BJ (cell line): ENCODE measurements at regions of chr7 and their contacts with region 1.

Region 1: GRCh38 chr7:151017953-151018420 is 6.3 kb downstream of the ATG9B start:
- DNase-seq: no peak
- H3K4me3 ChIP-seq: peak overlapping the region; percentile 14; the same call in 1 of the 2 replicates
- H3K27me3 ChIP-seq: peaks cover 27% of the 10 kb centered on the region
- CTCF ChIP-seq: peak; percentile 98

Region 2: DNA sequence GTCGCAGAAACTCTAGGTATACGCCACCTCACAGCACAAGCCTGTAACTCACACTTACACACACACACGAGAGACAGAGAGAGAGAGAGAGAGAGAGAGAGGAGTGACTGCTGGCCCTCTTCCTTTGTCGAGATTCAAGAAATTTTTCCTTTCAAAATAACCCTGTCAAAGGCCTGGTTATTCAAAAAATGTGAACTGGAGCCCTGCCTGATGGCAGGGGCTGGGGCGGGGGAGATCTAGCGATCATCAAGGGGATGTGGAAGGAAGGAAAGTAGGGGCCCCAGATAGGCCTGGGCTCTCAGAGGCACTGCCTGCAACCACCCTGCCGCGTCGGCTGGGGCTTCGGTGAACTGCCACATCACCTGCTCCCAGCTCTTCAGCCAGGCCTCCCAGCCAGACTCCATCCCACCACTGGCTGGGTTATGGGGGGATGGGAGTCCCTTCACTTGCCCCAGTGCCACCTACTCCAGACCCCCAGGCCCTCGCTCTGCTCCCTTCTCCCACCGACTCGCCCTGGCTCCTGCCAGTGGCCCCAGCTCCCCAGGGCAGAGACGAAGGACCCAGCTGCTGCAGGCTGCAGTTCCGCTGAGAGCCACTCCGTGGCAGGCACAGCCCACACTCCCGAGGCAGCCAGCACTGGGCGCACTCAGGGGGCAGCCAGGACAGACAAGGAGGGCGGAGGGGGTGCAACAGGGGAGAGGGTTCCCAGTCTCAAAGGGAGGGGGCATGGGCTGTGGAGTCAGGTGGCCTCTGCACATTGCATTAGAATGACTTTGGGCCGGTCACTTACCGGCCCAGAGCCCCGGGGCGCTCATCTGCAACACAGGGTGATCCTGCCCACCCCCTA is 55.2 kb before region 1 on chr7:
- CTCF ChIA-PET with region 1: interaction called, 15 read pairs
- POLR2A ChIA-PET with region 1: no interaction called
- DNase-seq: no peak
- H3K4me3 ChIP-seq: no peak overlapping the region
- H3K27me3 ChIP-seq: peaks cover 3% of the 10 kb centered on the region
- CTCF ChIP-seq: peak; percentile 92

Region 3: DNA sequence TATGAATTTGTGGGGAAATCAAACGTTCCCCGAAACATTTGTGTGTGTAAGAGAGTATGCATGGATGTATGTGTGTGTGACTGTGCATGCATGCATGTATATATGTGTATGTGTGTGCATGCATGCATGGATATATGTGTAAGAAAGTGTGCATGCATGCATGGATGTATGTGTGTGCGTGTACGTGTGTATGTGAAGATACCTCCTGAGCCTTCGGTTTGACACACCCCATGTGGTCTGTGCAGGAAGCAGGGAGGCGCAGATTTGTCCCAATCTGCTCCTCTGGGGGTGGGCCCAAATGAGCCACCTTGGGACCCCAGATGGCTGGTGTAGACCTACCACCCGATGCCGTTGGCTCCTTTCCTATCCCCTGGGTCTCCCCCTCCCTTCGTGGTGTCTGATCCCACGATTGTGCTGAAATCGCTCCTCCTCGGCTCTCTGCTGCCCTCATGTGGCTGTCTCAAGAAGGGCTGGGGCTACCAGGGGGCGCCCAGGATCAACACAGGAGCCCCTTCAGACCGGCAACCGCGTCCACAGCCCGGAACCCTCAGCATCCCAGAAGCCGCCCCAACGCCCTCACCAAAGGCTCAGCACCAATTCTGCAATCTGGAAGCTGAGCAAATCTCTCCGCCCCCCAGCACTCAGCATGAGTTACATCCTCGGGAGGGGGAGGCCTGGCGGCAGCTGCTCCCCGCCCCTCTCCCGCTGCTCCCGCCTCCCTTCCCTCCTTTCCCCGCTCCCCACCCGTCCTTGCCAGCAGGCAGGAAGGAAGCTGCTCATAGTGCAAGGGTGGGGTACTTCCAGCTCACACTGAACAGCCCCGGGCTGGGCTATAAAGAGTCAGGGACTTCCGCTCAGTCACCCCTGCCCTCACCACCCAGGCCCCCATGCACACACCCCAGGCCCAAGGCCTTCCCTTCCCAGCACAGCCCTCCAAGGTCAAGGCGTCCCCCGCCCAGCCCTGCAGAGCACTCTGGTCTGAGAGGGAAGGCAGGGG is 29.5 kb before region 1 on chr7:
- CTCF ChIA-PET with region 1: interaction called, 12 read pairs
- POLR2A ChIA-PET with region 1: no interaction called
- DNase-seq: no peak
- H3K4me3 ChIP-seq: no peak overlapping the region
- H3K27me3 ChIP-seq: peaks cover 4% of the 10 kb centered on the region
- CTCF ChIP-seq: peak; percentile 84

Region 4: GRCh38 chr7:151028131-151028947 is 10.4 kb after region 1 on chr7 and contains the start of gene ABCB8:
- CTCF ChIA-PET with region 1: interaction called, 22 read pairs
- POLR2A ChIA-PET with region 1: no interaction called
- DNase-seq: peak; percentile 99
- H3K4me3 ChIP-seq: peak within 1 kb of the TSS; percentile 84
- H3K27me3 ChIP-seq: 0 out of 2 replicates have a peak, but pooled peaks cover 1% of the 10 kb centered on the region
- CTCF ChIP-seq: peak; percentile 50
- polyA plus RNA-seq, gene ABCB8: 13.0 and 23.6 TPM in 2 replicates

Region 5: GRCh38 chr7:151038951-151039849 is 21.2 kb after region 1 on chr7:
- CTCF ChIA-PET with region 1: interaction called, 15 read pairs
- POLR2A ChIA-PET with region 1: no interaction called
- DNase-seq: peak; percentile 70
- H3K4me3 ChIP-seq: no peak overlapping the region
- H3K27me3 ChIP-seq: no peaks in the 10 kb centered on the region
- CTCF ChIP-seq: no peak

Region 6: DNA sequence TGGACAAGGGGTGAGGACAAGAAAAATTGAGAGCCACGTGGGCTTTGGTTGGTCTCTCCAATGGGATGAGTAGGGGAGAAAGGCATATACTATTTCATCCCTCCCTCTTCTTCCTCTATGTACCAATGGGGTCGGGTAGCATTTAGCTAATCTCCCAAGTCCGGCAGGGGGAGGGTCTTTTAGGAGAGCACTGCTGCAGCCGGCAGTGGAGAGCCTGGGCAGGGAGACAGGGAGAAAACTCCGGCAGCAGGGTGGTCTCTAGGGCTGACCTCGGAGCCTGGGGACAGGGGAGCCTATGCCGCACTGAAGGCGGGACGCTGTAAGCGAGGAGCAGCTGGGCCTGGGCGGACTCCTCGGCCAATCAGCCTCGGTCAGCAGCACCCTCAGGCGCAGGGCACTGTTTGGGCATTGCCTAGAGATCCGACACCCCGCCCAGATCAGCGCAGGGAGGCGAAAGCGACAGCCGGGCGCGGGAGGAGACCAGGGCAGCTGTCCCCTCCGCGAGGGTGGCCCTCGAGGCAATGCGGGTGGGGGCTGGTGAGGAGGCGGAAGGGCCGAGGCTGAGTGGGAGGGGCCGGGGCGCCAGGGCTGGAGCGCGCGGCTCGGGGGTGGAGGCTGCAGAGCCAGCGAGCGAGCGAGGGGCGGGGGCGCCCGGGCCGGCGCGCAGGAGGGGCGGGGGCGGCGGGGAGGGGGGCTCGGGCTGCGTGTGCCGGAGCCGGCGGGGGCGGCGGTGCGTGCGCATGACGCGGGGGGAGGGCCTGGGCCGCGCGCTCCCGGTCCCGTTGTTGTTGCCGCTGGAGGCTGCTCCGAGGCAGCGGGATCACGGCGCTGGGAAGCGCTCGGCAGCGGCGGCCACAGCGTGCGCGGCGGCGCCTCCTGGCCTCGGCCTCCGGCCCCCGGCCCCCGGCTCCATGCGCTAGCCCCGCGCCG is 68.0 kb after region 1 on chr7 and contains the start of gene AGAP3:
- CTCF ChIA-PET with region 1: interaction called, 13 read pairs
- POLR2A ChIA-PET with region 1: no interaction called
- DNase-seq: no peak
- H3K4me3 ChIP-seq: peak within 1 kb of the TSS; percentile 91
- H3K27me3 ChIP-seq: no peaks in the 10 kb centered on the region
- CTCF ChIP-seq: no peak
- polyA plus RNA-seq, gene AGAP3: 43.9 and 52.1 TPM in 2 replicates

Region 7: DNA sequence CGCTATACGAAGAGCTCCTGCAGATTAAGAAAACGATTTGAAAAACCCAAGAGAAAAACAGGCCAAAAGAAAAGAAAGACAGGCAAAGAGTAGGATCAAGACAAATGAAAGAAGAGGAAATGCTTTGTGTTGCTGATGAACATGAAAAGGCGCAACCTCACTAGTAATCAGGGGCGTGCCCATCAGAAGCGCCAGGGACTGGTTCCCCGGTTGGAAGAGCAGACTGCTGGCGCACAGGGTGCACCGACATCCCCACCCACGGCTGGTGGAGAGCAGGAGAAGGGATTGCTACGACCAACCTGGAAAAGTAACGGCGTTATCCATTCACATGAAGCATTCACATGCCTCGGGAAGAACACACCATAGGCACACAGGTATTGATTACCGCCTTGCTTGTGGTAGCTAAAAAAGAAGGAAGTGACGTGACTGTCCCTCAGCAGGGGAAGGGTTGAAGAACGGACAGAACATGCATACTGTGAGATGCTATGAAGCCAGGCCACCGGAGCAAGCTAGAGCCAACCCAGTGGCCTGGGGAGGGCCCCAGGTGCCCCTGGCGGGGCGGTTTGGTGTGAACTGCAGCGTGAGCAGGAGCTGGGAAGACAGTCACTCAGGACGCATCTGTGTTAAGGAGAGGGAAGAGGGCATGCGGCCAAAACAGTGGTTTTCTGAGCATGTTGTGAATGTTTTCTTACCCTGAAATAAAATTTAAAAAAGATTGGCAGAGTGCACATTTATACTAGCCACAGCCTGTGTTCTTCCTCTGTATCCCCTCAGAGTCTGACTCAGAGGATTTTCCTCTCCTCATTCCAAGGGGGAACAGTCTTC is 86.6 kb after region 1 on chr7:
- CTCF ChIA-PET with region 1: interaction called, 91 read pairs
- POLR2A ChIA-PET with region 1: no interaction called
- DNase-seq: peak; percentile 73
- H3K4me3 ChIP-seq: no peak overlapping the region
- H3K27me3 ChIP-seq: no peaks in the 10 kb centered on the region
- CTCF ChIP-seq: no peak